ENCODE measurements at regions of chr2 and their contacts with region 1.

Region 1: DNA sequence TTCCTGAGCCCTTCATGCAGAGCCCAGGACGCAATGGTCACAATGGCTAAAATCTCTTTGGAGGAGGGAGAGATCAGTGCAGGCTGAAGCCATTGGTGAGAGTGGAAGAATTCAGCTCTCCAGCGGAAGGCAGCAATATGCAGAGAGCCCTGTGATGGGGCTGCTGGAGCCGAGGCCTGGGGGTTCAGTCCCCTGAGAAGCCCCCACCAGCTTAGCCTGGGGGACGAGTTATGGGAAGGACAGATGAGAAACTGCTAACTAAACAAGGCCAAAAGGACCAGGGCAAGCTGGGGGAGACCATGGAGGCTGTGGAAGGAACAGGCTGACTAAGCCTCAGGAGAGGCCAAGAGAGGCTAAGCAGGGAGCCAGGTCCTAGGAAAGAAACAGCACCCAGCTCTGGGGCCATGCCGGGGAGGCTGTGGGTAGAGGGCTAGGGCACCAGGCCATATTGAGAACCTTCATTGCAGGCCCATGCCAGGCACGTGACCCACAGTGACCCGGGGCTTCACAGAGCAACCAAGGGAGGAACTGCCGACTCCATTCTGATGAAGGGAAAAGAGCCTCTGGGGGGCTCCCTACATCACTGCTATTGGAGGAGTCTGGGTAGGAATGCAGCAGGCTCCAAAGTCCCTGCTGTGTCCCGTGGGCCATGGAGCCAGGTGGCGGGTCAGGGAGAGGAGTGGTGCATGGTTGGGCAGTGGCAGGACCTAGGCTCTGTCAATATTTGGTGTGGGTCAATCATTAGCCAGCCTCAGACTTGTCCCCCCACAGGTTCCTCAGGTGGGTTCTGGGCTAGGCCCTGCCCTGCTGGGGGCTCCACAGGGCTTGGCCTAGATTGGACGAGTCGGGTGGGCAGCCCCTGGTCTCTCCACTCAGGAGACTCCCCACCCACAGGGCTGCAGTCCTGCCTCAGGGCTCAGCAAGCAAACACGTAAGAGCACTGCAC is 19.8 kb downstream of the PROC start:
- DNase-seq: peak; percentile 99
- ATAC-seq: peak; percentile 99
- H3K4me3 ChIP-seq: peak overlapping the region in 1 of 3 experiments; percentile 31; a peak in 2 of 6 replicates
- H3K27ac ChIP-seq: peak overlapping the region; percentile 94
- H3K4me1 ChIP-seq: peaks cover 50% of the 10 kb centered on the region
- H3K27me3 ChIP-seq: no peaks in the 10 kb centered on the region
- CTCF ChIP-seq: peak; percentile 91
- EP300 ChIP-seq: peak; percentile 86 to 96; a peak in 3 of 4 replicates
- POLR2A ChIP-seq: peak; percentile 81 to 84
- RAD21 ChIP-seq: peak; percentile 88

Region 2: GRCh38 chr2:127387655-127388422 is 50.2 kb before region 1 on chr2 and contains the start of gene MAP3K2:
- CTCF ChIA-PET with region 1: no interaction called
- POLR2A ChIA-PET with region 1: interaction called, 5 read pairs
- in situ Hi-C with region 1: no loop called
- intact Hi-C with region 1: loop called (anchors 1 kb)
- DNase-seq: peak; percentile 86
- ATAC-seq: peak; percentile 83
- H3K4me3 ChIP-seq: peak within 1 kb of the TSS; percentile 87 to 95 (median 94)
- H3K27ac ChIP-seq: peak within 1 kb of the TSS; percentile 99
- H3K4me1 ChIP-seq: peaks cover 52% of the 10 kb centered on the region
- H3K27me3 ChIP-seq: no peaks in the 10 kb centered on the region; a peak in 1 of 5 replicates
- CTCF ChIP-seq: 0 out of 2 replicates have a peak, but pooled peaks have one; percentile 1
- EP300 ChIP-seq: no peak; a peak in 2 of 4 replicates
- POLR2A ChIP-seq: peak; percentile 91 to 93
- RAD21 ChIP-seq: peak; percentile 85
- total RNA-seq, gene MAP3K2: 37.2 and 56.1 TPM in 2 replicates

Region 3: GRCh38 chr2:127408004-127408806 is 29.8 kb before region 1 on chr2:
- CTCF ChIA-PET with region 1: no interaction called
- POLR2A ChIA-PET with region 1: interaction called, 8 read pairs
- in situ Hi-C with region 1: no loop called
- intact Hi-C with region 1: loop called (anchors 1 kb)
- DNase-seq: peak; percentile 83
- ATAC-seq: peak; percentile 93
- H3K4me3 ChIP-seq: peak overlapping the region; percentile 71 to 89 (median 77)
- H3K27ac ChIP-seq: peak overlapping the region; percentile 82
- H3K4me1 ChIP-seq: peaks cover 63% of the 10 kb centered on the region
- H3K27me3 ChIP-seq: no peaks in the 10 kb centered on the region
- CTCF ChIP-seq: peak; percentile 46; the same call in 1 of the 2 replicates
- EP300 ChIP-seq: peak in 1 of 2 experiments; percentile 78; a peak in 2 of 4 replicates
- POLR2A ChIP-seq: peak; percentile 28 to 49; a peak in 2 of 4 replicates
- RAD21 ChIP-seq: peak; percentile 87

Region 4: DNA sequence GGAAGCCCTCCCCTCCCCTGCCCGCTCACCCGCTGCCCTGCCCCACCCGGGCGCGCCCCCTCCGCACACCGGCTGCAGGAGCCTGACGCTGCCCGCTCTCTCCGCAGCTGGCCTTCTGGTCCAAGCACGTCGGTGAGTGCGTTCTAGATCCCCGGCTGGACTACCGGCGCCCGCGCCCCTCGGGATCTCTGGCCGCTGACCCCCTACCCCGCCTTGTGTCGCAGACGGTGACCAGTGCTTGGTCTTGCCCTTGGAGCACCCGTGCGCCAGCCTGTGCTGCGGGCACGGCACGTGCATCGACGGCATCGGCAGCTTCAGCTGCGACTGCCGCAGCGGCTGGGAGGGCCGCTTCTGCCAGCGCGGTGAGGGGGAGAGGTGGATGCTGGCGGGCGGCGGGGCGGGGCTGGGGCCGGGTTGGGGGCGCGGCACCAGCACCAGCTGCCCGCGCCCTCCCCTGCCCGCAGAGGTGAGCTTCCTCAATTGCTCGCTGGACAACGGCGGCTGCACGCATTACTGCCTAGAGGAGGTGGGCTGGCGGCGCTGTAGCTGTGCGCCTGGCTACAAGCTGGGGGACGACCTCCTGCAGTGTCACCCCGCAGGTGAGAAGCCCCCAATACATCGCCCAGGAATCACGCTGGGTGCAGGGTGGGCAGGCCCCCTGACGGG is 15.1 kb before region 1 on chr2:
- CTCF ChIA-PET with region 1: interaction called, 3 read pairs
- POLR2A ChIA-PET with region 1: interaction called, 229 read pairs
- in situ Hi-C with region 1: no loop called
- intact Hi-C with region 1: loop called (anchors 2 kb)
- DNase-seq: no peak
- ATAC-seq: no peak
- H3K4me3 ChIP-seq: no peak overlapping the region
- H3K27ac ChIP-seq: no peak overlapping the region
- H3K4me1 ChIP-seq: peaks cover 41% of the 10 kb centered on the region
- H3K27me3 ChIP-seq: no peaks in the 10 kb centered on the region
- CTCF ChIP-seq: no peak
- EP300 ChIP-seq: no peak
- POLR2A ChIP-seq: no peak
- RAD21 ChIP-seq: no peak

Region 5: DNA sequence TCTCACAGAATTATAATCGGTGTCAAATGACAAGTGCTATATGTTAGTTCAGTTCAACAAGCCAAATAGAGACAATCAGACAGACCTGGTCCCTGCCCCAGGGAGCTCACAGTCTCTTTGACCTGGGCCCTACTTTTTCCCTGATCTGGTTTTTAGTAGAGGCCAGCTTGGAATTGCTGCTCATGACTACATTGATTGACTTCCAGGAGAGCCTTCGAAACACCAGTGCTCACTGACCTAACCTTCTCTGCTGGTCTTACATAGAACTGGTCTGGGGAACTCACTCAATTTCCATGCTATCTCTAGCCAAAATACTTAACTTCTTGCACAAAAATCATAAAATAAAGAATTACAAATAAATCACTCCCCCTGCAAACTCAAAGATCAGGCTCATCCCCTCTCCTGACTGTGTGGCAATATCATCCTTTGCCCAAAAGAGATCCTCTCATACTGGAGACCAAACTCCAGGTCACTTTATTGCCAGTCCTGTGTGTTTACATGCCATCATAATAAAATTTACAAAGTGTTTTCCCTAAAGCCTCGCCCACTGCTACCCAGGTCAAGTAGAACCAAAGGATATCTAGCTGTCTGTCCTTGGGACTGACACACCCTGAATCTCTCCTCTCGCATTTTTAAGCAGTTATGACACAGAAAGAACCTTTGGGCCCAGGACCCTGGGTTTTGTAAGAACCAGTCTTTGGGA is 33.4 kb after region 1 on chr2:
- CTCF ChIA-PET with region 1: no interaction called
- POLR2A ChIA-PET with region 1: no interaction called
- in situ Hi-C with region 1: no loop called
- intact Hi-C with region 1: loop called (anchors 1 kb)
- DNase-seq: no peak
- ATAC-seq: peak; percentile 27
- H3K4me3 ChIP-seq: no peak overlapping the region
- H3K27ac ChIP-seq: no peak overlapping the region
- H3K4me1 ChIP-seq: peaks cover 25% of the 10 kb centered on the region
- H3K27me3 ChIP-seq: no peaks in the 10 kb centered on the region
- CTCF ChIP-seq: no peak
- EP300 ChIP-seq: no peak
- POLR2A ChIP-seq: no peak
- RAD21 ChIP-seq: no peak

Region 6: GRCh38 chr2:127479219-127479825 is 41.3 kb after region 1 on chr2:
- CTCF ChIA-PET with region 1: interaction called, 8 read pairs
- POLR2A ChIA-PET with region 1: no interaction called
- in situ Hi-C with region 1: no loop called
- intact Hi-C with region 1: loop called (anchors 1 kb)
- DNase-seq: peak; percentile 73
- ATAC-seq: peak; percentile 86
- H3K4me3 ChIP-seq: no peak overlapping the region
- H3K27ac ChIP-seq: no peak overlapping the region
- H3K4me1 ChIP-seq: peaks cover 19% of the 10 kb centered on the region; the same call in 1 of the 2 replicates
- H3K27me3 ChIP-seq: no peaks in the 10 kb centered on the region
- CTCF ChIP-seq: peak; percentile 85
- EP300 ChIP-seq: no peak
- POLR2A ChIP-seq: no peak
- RAD21 ChIP-seq: peak; percentile 87

Region 7: GRCh38 chr2:128573116-128573515 is 1135.1 kb after region 1 on chr2:
- CTCF ChIA-PET with region 1: no interaction called
- POLR2A ChIA-PET with region 1: no interaction called
- in situ Hi-C with region 1: no loop called
- intact Hi-C with region 1: no loop called
- DNase-seq: no peak
- ATAC-seq: no peak
- H3K4me3 ChIP-seq: no peak overlapping the region
- H3K27ac ChIP-seq: no peak overlapping the region
- H3K4me1 ChIP-seq: no peaks in the 10 kb centered on the region
- H3K27me3 ChIP-seq: peaks cover 2 to 17% of the 10 kb centered on the region in 2 experiments; a peak in 3 of 5 replicates
- CTCF ChIP-seq: no peak
- EP300 ChIP-seq: no peak
- POLR2A ChIP-seq: no peak
- RAD21 ChIP-seq: no peak